ENCODE measurements at regions of chr12 and their contacts with region 1.

Region 1: DNA sequence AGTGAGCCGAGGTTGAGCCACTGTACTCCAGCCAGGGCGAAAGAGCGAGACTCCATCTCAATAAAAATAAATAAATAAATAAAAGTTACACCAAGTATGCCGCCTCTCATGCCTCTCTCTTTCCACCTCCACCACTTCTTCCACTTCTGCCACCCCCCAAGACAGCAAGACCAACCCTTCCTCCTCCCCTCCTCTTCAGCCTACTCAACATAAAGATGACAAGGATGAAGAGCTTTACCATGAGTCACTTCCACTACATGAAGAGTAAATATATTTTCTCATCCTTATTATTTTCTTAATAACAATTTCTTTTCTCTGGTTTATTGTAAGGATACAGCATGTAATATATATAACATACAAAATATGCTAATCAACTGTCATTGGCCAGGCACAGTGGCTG is 3.6 kb upstream of the TMED2 start:
- DNase-seq: no peak
- ATAC-seq: no peak
- H3K4me3 ChIP-seq: no peak overlapping the region
- H3K27ac ChIP-seq: no peak overlapping the region
- H3K4me1 ChIP-seq: peaks cover 9 to 17% of the 10 kb centered on the region in 2 experiments
- H3K27me3 ChIP-seq: no peaks in the 10 kb centered on the region
- CTCF ChIP-seq: no peak
- POLR2A ChIP-seq: no peak
- RAD21 ChIP-seq: no peak

Region 2: DNA sequence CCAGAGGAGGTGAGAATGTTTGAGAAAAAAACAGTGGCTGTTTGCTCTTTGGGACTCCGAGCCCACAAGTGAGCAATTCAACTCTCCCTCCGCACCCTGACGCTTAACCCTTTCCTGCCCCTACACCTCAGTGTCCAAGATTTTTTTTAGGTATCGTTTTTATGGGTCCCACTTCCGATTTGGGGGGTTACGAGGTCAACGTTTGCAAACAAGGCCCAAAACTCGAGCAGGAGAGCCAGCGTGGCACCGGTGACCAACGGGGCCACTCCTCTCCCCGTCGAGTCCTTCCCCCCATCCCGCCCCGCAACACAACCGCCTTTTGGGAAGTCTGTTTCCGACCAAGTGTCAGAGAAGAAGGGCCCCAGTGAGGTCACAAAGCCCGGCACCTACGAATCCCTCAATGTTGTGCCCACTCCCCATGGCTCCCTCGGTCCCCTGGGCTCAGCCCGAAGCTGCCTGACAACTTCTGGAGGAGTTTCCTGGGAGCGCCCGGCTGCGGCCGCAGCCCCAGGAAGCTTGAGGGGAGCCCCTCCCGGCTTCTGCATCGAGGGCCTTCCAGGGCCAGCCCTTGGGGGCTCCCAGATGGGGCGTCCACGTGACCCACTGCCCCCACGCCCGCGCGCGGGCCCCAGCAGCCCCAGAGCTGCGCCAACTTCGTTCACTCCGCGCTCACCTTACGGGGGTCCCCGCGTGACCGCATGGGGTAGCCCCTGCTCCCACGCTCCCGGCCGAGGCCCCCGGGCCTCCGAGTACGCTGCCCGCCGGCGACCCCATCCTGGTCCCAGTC is 310.4 kb before region 1 on chr12:
- CTCF ChIA-PET with region 1: no interaction called
- POLR2A ChIA-PET with region 1: no interaction called
- RAD21 ChIA-PET with region 1: no interaction called
- intact Hi-C with region 1: loop called (anchors 1 kb)
- DNase-seq: no peak
- ATAC-seq: peak; percentile 16
- H3K4me3 ChIP-seq: peak overlapping the region; percentile 72 to 76
- H3K27ac ChIP-seq: peak overlapping the region; percentile 92
- H3K4me1 ChIP-seq: peaks cover 6 to 19% of the 10 kb centered on the region in 2 experiments; a peak in 3 of 4 replicates
- H3K27me3 ChIP-seq: no peaks in the 10 kb centered on the region
- CTCF ChIP-seq: no peak
- POLR2A ChIP-seq: no peak
- RAD21 ChIP-seq: no peak

Region 3: DNA sequence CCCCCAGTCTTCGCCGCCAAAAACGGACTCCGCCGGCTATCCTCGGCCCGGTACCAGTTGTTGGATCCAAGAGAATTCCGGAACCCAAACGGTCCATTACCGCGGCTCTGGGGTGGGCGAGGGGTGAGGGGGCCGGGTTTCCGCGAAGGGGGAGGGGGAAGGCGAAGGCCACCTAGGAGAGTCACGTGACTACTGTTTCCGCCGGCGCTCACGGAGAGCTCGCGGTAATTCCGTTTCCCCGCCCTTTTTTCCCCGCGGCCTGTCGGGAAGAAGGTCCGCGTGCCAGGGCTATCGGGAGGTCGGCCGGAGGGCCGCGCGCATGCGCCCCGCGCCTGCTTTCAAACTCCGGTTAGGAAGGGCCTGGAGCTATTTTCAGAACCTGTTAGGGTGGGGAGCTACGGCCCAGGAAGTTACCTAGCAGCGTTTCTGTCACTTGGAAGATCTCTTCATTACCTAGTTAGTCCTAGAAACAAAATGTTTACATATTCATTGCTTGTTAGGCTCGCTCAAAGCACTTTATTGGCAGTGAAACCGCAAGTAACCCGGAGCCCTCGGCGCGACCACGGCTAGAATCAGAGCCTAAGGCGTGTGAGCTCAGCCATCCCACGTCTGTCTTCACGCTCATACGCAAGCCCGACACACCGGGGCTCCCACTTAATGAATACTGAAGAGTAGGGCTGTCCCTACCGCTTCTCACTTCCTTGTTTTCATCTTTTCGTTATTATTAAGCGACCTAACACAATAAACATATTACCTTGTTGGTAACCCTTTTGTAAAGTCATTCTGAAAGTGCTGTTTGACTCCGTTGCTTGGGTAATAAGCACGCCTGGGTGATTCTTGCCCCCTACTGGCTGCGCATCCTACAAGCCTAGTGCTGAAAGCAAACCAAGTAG is 215.5 kb before region 1 on chr12:
- CTCF ChIA-PET with region 1: no interaction called
- POLR2A ChIA-PET with region 1: no interaction called
- RAD21 ChIA-PET with region 1: interaction called in 1 of 2 experiments, 3 read pairs
- intact Hi-C with region 1: loop called (anchors 2 kb)
- DNase-seq: peak; percentile 98
- ATAC-seq: peak; percentile 88
- H3K4me3 ChIP-seq: peak overlapping the region; percentile 60 to 87
- H3K27ac ChIP-seq: peak overlapping the region; percentile 85
- H3K4me1 ChIP-seq: peaks cover 11 to 30% of the 10 kb centered on the region in 2 experiments; a peak in 3 of 4 replicates
- H3K27me3 ChIP-seq: no peaks in the 10 kb centered on the region
- CTCF ChIP-seq: peak; percentile 45 to 85 (median 82); a peak in 5 of 6 replicates
- POLR2A ChIP-seq: peak; percentile 65
- RAD21 ChIP-seq: peak; percentile 68

Region 4: GRCh38 chr12:123389560-123390351 is 191.0 kb before region 1 on chr12:
- CTCF ChIA-PET with region 1: no interaction called
- POLR2A ChIA-PET with region 1: no interaction called
- RAD21 ChIA-PET with region 1: no interaction called
- intact Hi-C with region 1: loop called (anchors 5 kb)
- DNase-seq: no peak
- ATAC-seq: peak; percentile 47
- H3K4me3 ChIP-seq: peak overlapping the region; percentile 53 to 72
- H3K27ac ChIP-seq: peak overlapping the region; percentile 76
- H3K4me1 ChIP-seq: peaks cover 16 to 31% of the 10 kb centered on the region in 2 experiments
- H3K27me3 ChIP-seq: no peaks in the 10 kb centered on the region
- CTCF ChIP-seq: no peak
- POLR2A ChIP-seq: no peak
- RAD21 ChIP-seq: no peak

Region 5: DNA sequence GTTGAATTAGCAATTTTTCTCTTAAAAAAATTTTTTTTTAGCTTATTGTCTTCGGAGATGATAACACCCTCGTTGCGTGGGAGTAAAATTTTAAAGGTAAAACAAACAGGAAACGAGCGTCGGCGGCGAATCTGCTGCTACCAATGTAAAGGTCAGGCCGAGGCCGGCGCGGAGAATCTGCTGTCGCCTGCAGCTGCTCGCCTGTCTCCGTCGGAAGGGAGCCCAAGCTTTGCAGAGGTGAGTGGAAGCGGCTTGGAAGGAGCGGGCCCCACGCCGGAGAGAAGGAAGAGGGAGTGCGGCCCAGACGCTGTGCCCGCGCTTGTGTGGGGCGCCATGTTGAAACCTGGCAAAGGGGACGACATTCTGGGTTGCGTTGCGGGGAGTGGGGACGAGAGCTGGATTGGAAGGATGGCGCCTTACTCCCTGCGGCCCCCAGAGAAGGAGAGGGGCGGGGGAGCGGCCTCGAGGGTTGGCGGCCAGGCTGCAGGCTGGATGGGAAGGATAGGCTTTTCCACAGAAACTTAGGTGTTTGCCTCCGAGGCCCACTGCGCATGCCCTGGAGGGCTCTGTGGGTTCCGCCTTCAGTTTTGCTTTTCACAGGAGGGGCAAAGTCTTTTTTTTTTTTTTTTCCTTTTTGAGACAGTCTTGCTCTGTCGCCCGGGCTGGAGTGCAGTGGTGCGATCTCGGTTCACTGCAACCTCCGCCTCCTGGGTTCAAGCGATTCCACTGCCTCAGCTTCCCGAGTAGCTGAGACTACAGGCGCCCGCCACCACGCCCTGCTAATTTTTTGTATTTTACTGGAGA is 122.6 kb before region 1 on chr12 and contains the start of gene SNRNP35:
- CTCF ChIA-PET with region 1: no interaction called
- POLR2A ChIA-PET with region 1: no interaction called
- RAD21 ChIA-PET with region 1: interaction called in 1 of 2 experiments, 5 read pairs
- intact Hi-C with region 1: loop called (anchors 5 kb)
- DNase-seq: peak; percentile 68
- ATAC-seq: peak; percentile 81
- H3K4me3 ChIP-seq: peak within 1 kb of the TSS; percentile 75 to 82
- H3K27ac ChIP-seq: peak within 1 kb of the TSS; percentile 98
- H3K4me1 ChIP-seq: peaks cover 4 to 6% of the 10 kb centered on the region in 2 experiments; a peak in 2 of 4 replicates
- H3K27me3 ChIP-seq: no peaks in the 10 kb centered on the region
- CTCF ChIP-seq: no peak
- POLR2A ChIP-seq: peak; percentile 57
- RAD21 ChIP-seq: no peak
- total RNA-seq, gene SNRNP35: 12.4 TPM

Region 6: DNA sequence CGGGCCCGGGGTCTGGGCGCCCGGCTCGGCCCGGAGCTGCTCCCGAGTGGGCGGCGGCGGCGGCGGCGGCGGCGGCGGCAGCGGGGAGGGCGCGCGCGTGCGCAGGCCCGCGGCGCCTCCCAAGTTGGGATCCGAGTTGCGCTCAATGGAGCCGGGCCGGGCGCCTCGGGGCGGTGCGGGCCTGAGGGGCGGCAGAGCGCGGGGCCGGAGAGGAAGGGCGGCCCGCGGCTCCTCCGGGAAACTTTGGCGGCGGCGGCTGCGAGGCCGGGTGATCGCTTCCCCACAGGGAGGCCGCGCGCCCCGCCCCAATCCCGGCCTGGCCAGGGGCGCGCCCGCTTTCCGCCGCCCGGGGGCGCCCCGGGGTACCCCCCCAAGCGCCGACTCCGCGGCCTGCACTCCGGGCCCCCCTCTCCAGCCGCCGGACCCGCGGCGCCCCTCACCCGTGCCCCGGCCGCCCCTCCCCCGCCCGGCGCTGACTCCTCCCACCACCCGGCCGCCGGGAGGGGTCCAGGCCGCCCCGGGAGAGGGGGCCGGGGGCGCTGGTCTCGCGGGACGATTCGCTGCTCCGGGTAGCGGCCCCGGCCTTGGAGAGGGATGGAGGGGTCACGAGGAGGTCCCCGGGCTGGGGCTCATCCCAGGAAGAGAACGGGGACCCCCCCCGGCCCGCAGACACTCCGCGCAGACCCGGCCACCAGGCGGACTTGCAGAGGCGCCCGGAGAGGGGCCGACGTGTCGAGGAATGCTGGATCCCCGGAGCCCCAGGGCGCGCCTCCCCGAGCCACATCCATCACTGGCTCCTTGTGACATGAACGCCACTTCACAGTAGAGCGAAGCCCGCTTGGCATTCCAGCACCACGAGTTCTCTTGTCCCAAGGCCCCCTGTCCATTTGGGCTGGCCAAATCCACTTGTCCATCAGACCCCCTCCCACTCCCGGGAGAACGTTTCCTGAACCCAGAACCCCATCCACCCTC is 46.8 kb before region 1 on chr12 and contains the start of gene RILPL1:
- CTCF ChIA-PET with region 1: interaction called, 3 read pairs
- POLR2A ChIA-PET with region 1: interaction called, 3 read pairs
- RAD21 ChIA-PET with region 1: no interaction called
- intact Hi-C with region 1: loop called (anchors 5 kb)
- DNase-seq: no peak
- ATAC-seq: peak; percentile 73
- H3K4me3 ChIP-seq: peak within 1 kb of the TSS; percentile 82 to 88
- H3K27ac ChIP-seq: peak within 1 kb of the TSS; percentile 80
- H3K4me1 ChIP-seq: peaks cover 7 to 20% of the 10 kb centered on the region in 2 experiments; a peak in 3 of 4 replicates
- H3K27me3 ChIP-seq: no peaks in the 10 kb centered on the region
- CTCF ChIP-seq: no peak; a peak in 1 of 6 replicates
- POLR2A ChIP-seq: no peak
- RAD21 ChIP-seq: no peak
- total RNA-seq, gene RILPL1: 11.8 TPM

Region 7: GRCh38 chr12:123670882-123671728 is 90.3 kb after region 1 on chr12 and contains the start of gene TCTN2:
- CTCF ChIA-PET with region 1: no interaction called
- POLR2A ChIA-PET with region 1: no interaction called
- RAD21 ChIA-PET with region 1: no interaction called
- intact Hi-C with region 1: no loop called
- DNase-seq: peak; percentile 74
- ATAC-seq: peak; percentile 100
- H3K4me3 ChIP-seq: peak within 1 kb of the TSS; percentile 73 to 83
- H3K27ac ChIP-seq: 0 out of 2 replicates have a peak within 1 kb of the TSS, but pooled peaks have one; percentile 30
- H3K4me1 ChIP-seq: peaks cover 9 to 10% of the 10 kb centered on the region in 2 experiments
- H3K27me3 ChIP-seq: no peaks in the 10 kb centered on the region
- CTCF ChIP-seq: no peak
- POLR2A ChIP-seq: no peak
- RAD21 ChIP-seq: no peak
- total RNA-seq, gene TCTN2: 12.1 TPM

Measured in HCT116 (cell line).